ENCODE measurements at regions of chrX and their contacts with region 1.

Region 1: GRCh38 chrX:96843566-96843965 is 40.1 kb upstream of the RPA4 start:
- DNase-seq: peak in 1 of 3 donors; percentile 25
- ATAC-seq: peak in 1 of 2 donors; percentile 51
- H3K4me3 ChIP-seq: no peak overlapping the region
- H3K27ac ChIP-seq: no peak overlapping the region
- H3K4me1 ChIP-seq: no peaks in the 10 kb centered on the region
- H3K27me3 ChIP-seq: no peaks in the 10 kb centered on the region

Region 2: DNA sequence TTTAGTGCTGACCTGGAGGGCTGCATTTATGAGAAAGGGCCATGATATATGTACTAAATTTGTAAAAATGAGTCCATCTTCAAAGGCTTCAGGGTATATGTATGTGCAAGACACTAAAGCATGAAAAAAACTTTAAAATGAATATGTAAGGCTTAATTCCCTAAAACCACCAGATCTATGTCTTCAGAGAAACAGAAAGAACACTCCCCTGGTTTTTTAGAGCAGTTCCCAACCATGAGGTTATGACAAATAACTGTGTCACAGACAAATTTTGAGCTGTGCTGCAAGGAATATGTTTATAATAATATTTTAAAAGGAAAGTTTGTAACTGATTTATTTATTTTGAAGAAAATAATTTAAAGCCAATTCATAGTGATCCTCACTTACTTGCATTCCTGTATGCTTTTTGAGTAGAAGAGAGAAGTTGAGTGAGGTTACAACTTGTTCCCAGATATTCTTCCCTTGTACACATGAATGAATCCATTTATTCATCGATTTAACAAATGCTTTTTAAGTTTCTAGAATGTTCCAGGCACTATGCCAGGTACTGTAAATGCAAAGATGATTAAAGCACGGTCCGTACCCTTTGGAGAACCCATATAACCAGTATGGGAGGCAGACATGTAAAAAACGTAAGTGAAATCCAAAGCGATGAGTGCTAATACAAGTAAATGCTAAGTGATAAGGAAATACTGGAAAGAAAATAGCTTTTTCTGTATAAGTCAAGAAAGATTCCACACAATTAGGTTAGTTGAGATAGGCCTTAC is 454.1 kb before region 1 on chrX:
- intact Hi-C with region 1: loop called in 1 of 4 experiments (anchors 10 kb)
- DNase-seq: no peak
- ATAC-seq: no peak
- H3K4me3 ChIP-seq: no peak overlapping the region
- H3K27ac ChIP-seq: no peak overlapping the region
- H3K4me1 ChIP-seq: no peaks in the 10 kb centered on the region
- H3K27me3 ChIP-seq: no peaks in the 10 kb centered on the region

Region 3: DNA sequence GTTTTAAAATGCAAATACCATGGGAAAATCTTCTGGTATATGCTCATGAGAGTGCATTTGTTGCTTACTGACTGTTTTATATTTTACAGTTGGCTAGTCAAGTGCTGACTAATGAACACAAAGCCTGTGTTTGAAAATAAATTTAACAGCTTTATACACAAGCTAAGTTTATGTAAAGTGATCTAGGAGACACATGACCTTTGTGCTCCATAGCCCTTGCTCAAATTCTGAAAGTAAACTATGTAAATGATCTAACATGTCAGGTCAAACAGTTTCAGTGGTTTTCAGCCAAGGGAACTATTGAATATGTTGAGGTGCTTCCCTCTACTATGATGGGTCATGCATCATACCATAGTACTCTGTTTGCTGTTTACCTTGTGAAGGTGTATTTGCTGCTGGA is 122.2 kb before region 1 on chrX:
- intact Hi-C with region 1: no loop called
- DNase-seq: no peak
- ATAC-seq: no peak
- H3K4me3 ChIP-seq: no peak overlapping the region
- H3K27ac ChIP-seq: no peak overlapping the region
- H3K4me1 ChIP-seq: no peaks in the 10 kb centered on the region
- H3K27me3 ChIP-seq: no peaks in the 10 kb centered on the region

Measured in right cardiac atrium (tissue), 5 donors.